Activated T-helper 2 cell treated with anti-CD3 and anti-CD28 coated beads, Interferon-gamma antibody, Interleukin-2, Interleukin-4, amounts not matched to agents 10 μg/mL and 5 μg/mL and 100 μg/mL, durations not matched to agents 14 hours and 24 hours and 36 hours (primary cell): ENCODE measurements at regions of chr14 and their contacts with region 1.

Region 1: DNA sequence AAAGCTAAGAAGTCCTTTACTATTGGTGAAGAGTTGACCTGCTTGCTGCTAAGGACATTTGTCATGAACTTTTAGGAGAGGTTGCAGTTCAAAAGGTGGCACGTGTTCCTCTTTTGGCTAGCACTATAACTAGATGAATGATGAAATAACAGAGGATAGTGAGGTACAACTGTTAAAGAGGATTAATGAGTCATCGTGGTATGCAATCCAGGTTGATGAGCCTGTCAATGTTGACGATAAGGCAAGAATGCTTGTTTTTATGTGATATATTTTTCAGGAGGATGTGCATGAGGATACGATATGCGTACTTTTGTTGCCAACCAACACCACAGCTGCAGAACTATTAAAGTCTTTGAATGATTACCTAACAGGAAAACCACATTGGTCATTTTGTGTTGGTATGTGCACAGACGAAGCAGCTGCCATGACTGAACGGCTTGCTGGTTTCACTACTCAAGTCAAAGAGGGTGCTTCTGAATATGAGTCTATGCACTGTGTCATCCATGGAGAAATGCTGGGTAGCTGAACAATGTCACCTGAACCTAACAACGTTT is 10.6 kb downstream of the CEP128 start:
- DNase-seq: peak; percentile 58
- H3K4me3 Mint-ChIP-seq: peak overlapping the region; percentile 52
- H3K27ac Mint-ChIP-seq: peak overlapping the region; percentile 79
- H3K4me1 Mint-ChIP-seq: peaks cover 39% of the 10 kb centered on the region
- H3K27me3 Mint-ChIP-seq: no peaks in the 10 kb centered on the region

Region 2: GRCh38 chr14:80987235-80988032 is 56.5 kb after region 1 on chr14:
- intact Hi-C with region 1: loop called (anchors 10 kb)
- DNase-seq: peak; percentile 44
- H3K4me3 Mint-ChIP-seq: no peak overlapping the region
- H3K27ac Mint-ChIP-seq: no peak overlapping the region
- H3K4me1 Mint-ChIP-seq: peaks cover 11% of the 10 kb centered on the region
- H3K27me3 Mint-ChIP-seq: peaks cover 10% of the 10 kb centered on the region